Astrocyte of the cerebellum (primary cell): ENCODE measurements at regions of chr2 and their contacts with region 1.

Region 1: DNA sequence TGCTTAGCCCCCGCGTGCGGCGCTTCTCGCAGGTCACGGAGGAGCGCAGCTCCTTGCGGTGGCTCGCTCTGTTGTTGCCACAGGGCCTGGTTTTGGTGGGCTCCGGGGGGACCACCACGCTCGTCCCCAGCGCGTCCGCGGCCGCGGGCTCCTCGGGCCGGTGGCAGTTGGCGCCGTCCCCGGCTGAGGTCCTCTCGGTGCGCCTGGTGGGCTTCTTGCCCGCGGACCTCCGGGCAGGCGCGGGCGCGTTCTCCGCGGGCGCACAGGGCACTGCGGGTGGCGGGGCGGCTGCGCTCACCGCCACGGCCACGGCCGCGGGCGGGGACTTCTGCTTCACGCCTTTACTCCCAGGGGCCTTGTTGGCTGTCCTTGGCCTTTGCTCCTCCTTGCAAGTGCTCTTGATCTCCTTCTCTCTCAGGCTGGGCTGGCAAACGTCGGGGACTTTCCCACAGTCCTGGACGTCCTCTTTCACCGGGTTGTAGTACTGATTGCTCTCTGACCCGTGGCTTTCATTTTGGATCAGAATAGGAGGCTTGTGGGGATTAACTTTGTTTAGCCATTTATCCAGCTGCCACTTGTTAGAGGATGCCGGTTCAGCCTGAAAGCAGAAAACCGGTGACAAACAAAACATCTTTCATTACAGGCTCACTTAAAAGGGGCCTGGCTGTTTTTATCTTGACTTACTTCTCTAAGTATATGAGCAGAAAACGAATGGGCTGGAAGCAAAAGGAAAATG is 104.0 kb upstream of the REV1 start:
- DNase-seq: no peak
- H3K4me3 ChIP-seq: no peak overlapping the region
- CTCF ChIP-seq: no peak

Region 2: DNA sequence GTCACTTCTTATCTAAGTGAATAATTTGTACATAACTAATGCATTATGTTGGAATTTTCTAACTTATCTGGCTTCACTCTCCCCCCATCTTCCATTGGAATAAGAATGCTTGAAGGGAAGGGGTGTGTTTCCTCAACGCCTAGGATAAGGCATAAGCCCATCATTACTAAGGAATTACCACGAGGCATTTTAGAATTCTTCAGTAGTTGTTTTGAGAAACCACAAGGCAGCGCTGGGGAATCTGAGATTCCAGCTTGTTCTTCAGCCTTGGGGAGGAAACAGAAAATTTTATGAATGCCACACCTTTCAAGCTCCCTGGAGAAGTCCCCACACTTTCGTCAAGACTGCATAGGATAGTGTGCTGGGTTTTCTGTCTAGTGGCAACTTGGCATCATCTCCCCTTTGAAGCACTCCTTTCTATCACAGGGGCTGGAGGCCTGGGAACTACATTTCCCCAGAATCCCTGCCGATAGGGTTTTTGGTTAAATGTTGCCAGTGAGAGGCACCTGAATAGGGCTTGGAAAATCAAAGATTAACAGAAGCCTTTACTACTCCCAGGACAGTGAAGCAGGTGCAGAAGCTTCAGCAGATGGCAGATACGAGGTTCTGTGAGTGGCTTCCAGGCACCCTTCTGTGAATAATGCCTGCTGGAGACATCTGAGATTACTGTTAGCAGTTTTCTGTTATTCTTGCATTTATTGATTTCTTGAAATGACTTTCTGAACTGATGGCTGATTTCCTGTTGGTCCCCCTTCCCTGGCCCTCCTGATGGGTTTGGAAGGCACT is 88.6 kb after region 1 on chr2:
- in situ Hi-C with region 1: loop called (anchors 5 kb)
- DNase-seq: peak; percentile 50
- H3K4me3 ChIP-seq: no peak overlapping the region
- CTCF ChIP-seq: no peak